Naive thymus-derived CD4-positive, alpha-beta T cell (primary cell): ENCODE measurements at regions of chr1 and their contacts with region 1.

Region 1: DNA sequence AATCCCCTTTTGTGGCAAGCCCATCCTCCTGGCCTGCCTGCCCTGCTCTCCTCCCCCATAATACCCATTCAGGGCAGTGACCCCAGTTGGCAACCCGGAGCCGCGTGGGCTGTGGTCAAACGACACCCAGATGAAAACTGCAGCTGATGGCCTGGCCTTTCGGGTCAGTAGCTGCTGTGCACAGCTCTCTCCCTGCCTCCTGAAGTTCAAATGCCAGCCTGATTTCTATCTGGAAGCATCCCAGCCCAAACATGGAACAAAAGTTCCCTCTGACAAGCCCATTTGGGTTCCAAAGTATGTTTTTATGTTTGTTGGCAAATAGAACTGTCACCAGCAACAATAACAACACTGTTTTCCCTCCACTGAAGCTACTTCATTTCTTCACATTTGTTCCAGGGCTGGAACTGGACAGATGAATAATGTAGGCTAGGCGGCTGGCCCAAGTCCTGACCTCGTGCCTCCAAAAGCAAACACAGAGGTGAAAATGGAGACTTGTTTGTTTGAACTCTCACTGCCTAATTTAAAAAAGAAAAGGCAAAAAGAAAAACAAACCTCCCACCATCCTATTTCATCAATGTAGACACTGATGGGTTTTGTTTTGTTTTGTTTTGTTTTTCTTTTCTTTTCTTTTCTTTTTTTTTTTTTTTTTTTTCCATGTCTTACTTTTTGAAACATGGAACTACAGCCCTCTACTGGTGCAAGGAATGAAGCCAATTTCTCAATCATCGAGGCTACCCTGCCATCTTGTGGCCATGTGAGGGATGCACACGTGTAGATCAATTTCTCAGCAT is 179.0 kb downstream of the ADSS2 start:
- DNase-seq: peak; percentile 42 to 80 (median 73)
- ATAC-seq: peak; percentile 98
- H3K4me3 ChIP-seq: no peak overlapping the region
- H3K4me3 Mint-ChIP-seq: no peak overlapping the region
- H3K27ac ChIP-seq: no peak overlapping the region
- H3K27ac Mint-ChIP-seq: peak overlapping the region in 3 of 9 donors; percentile 0 to 45 (median 37)
- H3K4me1 ChIP-seq: no peaks in the 10 kb centered on the region
- H3K4me1 Mint-ChIP-seq: peaks cover 3 to 17% (median 12%) of the 10 kb centered on the region in 7 donors
- H3K27me3 ChIP-seq: no peaks in the 10 kb centered on the region
- H3K27me3 Mint-ChIP-seq: peaks cover 0 to 1% (median 0%) of the 10 kb centered on the region in 5 donors

Region 2: DNA sequence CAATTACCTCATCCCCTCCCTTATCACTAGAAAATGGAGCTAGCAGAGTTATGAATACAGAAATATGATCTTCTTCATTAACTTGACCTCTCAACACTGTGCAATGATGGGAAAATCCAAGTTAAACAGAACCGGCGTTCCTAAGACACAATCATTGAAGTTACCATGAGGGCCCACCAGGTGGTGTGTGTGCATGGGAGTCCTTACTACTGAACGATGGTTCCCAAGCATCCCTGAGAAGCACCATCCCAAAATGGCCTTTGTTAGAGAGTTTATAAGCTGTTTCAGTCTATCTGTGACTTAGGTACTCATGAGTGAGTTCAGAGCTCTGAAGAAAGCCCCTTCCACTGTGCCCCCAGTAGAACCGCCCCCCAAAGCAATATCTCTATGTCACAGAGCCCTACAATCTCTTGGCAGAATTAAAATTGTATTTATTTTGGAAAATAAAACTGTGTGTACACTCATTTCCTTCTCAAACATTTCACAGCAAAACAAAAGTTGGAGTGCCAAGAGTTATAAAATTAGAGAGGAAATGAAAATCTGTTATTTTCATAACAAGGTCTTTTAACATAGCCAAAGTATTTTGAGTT is 1805.0 kb before region 1 on chr1:
- CTCF ChIA-PET with region 1: no interaction called
- POLR2A ChIA-PET with region 1: no interaction called
- intact Hi-C with region 1: loop called in 1 of 2 experiments (anchors 5 kb)
- DNase-seq: peak in 1 of 9 donors; percentile 2
- ATAC-seq: peak; percentile 26
- H3K4me3 ChIP-seq: no peak overlapping the region
- H3K4me3 Mint-ChIP-seq: no peak overlapping the region
- H3K27ac ChIP-seq: no peak overlapping the region
- H3K27ac Mint-ChIP-seq: no peak overlapping the region
- H3K4me1 ChIP-seq: no peaks in the 10 kb centered on the region
- H3K4me1 Mint-ChIP-seq: no peaks in the 10 kb centered on the region
- H3K27me3 ChIP-seq: no peaks in the 10 kb centered on the region
- H3K27me3 Mint-ChIP-seq: peaks cover 0 to 25% (median 3%) of the 10 kb centered on the region in 5 donors

Region 3: GRCh38 chr1:243416495-243416894 is 856.2 kb before region 1 on chr1:
- CTCF ChIA-PET with region 1: no interaction called
- POLR2A ChIA-PET with region 1: no interaction called
- intact Hi-C with region 1: loop called (anchors 5 kb)
- DNase-seq: no peak
- ATAC-seq: no peak
- H3K4me3 ChIP-seq: no peak overlapping the region
- H3K4me3 Mint-ChIP-seq: peak overlapping the region in 1 of 10 donors; percentile 79
- H3K27ac ChIP-seq: no peak overlapping the region
- H3K27ac Mint-ChIP-seq: peak overlapping the region in 1 of 9 donors; percentile 75
- H3K4me1 ChIP-seq: peaks cover 5 to 7% of the 10 kb centered on the region in 2 donors
- H3K4me1 Mint-ChIP-seq: peaks cover 8 to 61% (median 24%) of the 10 kb centered on the region in 7 donors
- H3K27me3 ChIP-seq: no peaks in the 10 kb centered on the region
- H3K27me3 Mint-ChIP-seq: no peaks in the 10 kb centered on the region

Region 4: GRCh38 chr1:243508303-243508713 is 764.4 kb before region 1 on chr1:
- CTCF ChIA-PET with region 1: no interaction called
- POLR2A ChIA-PET with region 1: no interaction called
- intact Hi-C with region 1: loop called in 1 of 2 experiments (anchors 10 kb)
- DNase-seq: peak in 6 of 9 donors; percentile 30 to 58 (median 48)
- ATAC-seq: peak; percentile 94
- H3K4me3 ChIP-seq: no peak overlapping the region
- H3K4me3 Mint-ChIP-seq: peak overlapping the region in 9 of 10 donors; percentile 23 to 77 (median 63)
- H3K27ac ChIP-seq: no peak overlapping the region
- H3K27ac Mint-ChIP-seq: peak overlapping the region in 8 of 9 donors; percentile 65 to 89 (median 80)
- H3K4me1 ChIP-seq: peaks cover 4 to 13% of the 10 kb centered on the region in 2 donors
- H3K4me1 Mint-ChIP-seq: peaks cover 4 to 56% (median 42%) of the 10 kb centered on the region in 7 donors
- H3K27me3 ChIP-seq: no peaks in the 10 kb centered on the region
- H3K27me3 Mint-ChIP-seq: no peaks in the 10 kb centered on the region

Region 5: GRCh38 chr1:243708210-243708609 is 564.5 kb before region 1 on chr1:
- CTCF ChIA-PET with region 1: no interaction called
- POLR2A ChIA-PET with region 1: no interaction called
- intact Hi-C with region 1: loop called (anchors 1 kb)
- DNase-seq: peak in 5 of 9 donors; percentile 4 to 36 (median 15)
- ATAC-seq: no peak
- H3K4me3 ChIP-seq: no peak overlapping the region
- H3K4me3 Mint-ChIP-seq: no peak overlapping the region
- H3K27ac ChIP-seq: no peak overlapping the region
- H3K27ac Mint-ChIP-seq: no peak overlapping the region
- H3K4me1 ChIP-seq: no peaks in the 10 kb centered on the region
- H3K4me1 Mint-ChIP-seq: peaks cover 5 to 40% (median 27%) of the 10 kb centered on the region in 7 donors
- H3K27me3 ChIP-seq: no peaks in the 10 kb centered on the region
- H3K27me3 Mint-ChIP-seq: no peaks in the 10 kb centered on the region

Region 6: GRCh38 chr1:243946946-243947345 is 325.7 kb before region 1 on chr1:
- CTCF ChIA-PET with region 1: no interaction called
- POLR2A ChIA-PET with region 1: no interaction called
- intact Hi-C with region 1: loop called (anchors 1 kb)
- DNase-seq: peak in 6 of 9 donors; percentile 11 to 52 (median 38)
- ATAC-seq: peak; percentile 76
- H3K4me3 ChIP-seq: no peak overlapping the region
- H3K4me3 Mint-ChIP-seq: no peak overlapping the region
- H3K27ac ChIP-seq: no peak overlapping the region
- H3K27ac Mint-ChIP-seq: peak overlapping the region in 1 of 9 donors; percentile 17
- H3K4me1 ChIP-seq: no peaks in the 10 kb centered on the region
- H3K4me1 Mint-ChIP-seq: no peaks in the 10 kb centered on the region
- H3K27me3 ChIP-seq: no peaks in the 10 kb centered on the region
- H3K27me3 Mint-ChIP-seq: peaks cover 0 to 8% (median 5%) of the 10 kb centered on the region in 5 donors

Region 7: DNA sequence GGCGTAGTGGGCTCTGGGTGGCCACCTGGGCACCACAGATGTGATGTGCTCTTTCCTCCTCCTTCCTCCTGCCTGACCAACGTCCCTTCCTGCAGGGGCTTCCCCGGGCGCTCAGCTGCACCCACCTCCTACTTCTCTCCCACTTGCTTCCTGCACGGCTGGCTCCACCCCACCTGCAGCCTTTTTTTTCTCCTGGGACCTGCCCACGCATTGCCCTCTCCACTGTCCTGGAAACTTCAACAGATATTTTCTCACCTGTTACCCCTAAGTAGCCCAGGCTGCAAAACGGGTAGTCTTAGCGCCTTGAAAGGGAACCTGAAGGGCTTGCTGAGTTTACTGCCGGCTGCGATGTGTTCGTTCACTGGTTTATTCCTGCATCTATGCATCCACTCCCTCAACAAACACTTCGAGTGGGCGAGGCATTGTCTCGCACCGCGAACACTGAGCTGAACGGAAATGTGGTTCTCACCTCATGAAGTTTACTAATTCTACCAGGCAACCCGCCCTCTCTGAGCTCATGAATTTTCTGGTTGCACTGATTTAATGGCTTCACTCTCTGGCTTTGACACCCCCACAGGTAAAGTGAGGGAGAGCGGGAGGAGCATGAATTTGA is 198.0 kb before region 1 on chr1:
- CTCF ChIA-PET with region 1: no interaction called
- POLR2A ChIA-PET with region 1: no interaction called
- intact Hi-C with region 1: loop called in 1 of 2 experiments (anchors 1 kb)
- DNase-seq: peak; percentile 36 to 91 (median 86)
- ATAC-seq: peak; percentile 96
- H3K4me3 ChIP-seq: peak overlapping the region; percentile 45
- H3K4me3 Mint-ChIP-seq: peak overlapping the region; percentile 75 to 91 (median 88)
- H3K27ac ChIP-seq: peak overlapping the region; percentile 73
- H3K27ac Mint-ChIP-seq: peak overlapping the region; percentile 50 to 99 (median 97)
- H3K4me1 ChIP-seq: peaks cover 16 to 32% of the 10 kb centered on the region in 2 donors
- H3K4me1 Mint-ChIP-seq: peaks cover 19 to 64% (median 54%) of the 10 kb centered on the region in 7 donors
- H3K27me3 ChIP-seq: no peaks in the 10 kb centered on the region
- H3K27me3 Mint-ChIP-seq: peaks cover 0 to 20% (median 0%) of the 10 kb centered on the region in 5 donors

Region 8: GRCh38 chr1:245441689-245442088 is 1169.0 kb after region 1 on chr1:
- CTCF ChIA-PET with region 1: no interaction called
- POLR2A ChIA-PET with region 1: no interaction called
- intact Hi-C with region 1: no loop called
- DNase-seq: peak in 1 of 9 donors; percentile 4
- ATAC-seq: no peak
- H3K4me3 ChIP-seq: no peak overlapping the region
- H3K4me3 Mint-ChIP-seq: no peak overlapping the region
- H3K27ac ChIP-seq: no peak overlapping the region
- H3K27ac Mint-ChIP-seq: peak overlapping the region in 1 of 9 donors; percentile 7
- H3K4me1 ChIP-seq: no peaks in the 10 kb centered on the region
- H3K4me1 Mint-ChIP-seq: peaks cover 0 to 11% (median 8%) of the 10 kb centered on the region in 7 donors
- H3K27me3 ChIP-seq: no peaks in the 10 kb centered on the region
- H3K27me3 Mint-ChIP-seq: peaks cover 0 to 48% (median 39%) of the 10 kb centered on the region in 5 donors